OCI-LY7 (cell line): ENCODE measurements at regions of chr7 and their contacts with region 1.

Region 1: DNA sequence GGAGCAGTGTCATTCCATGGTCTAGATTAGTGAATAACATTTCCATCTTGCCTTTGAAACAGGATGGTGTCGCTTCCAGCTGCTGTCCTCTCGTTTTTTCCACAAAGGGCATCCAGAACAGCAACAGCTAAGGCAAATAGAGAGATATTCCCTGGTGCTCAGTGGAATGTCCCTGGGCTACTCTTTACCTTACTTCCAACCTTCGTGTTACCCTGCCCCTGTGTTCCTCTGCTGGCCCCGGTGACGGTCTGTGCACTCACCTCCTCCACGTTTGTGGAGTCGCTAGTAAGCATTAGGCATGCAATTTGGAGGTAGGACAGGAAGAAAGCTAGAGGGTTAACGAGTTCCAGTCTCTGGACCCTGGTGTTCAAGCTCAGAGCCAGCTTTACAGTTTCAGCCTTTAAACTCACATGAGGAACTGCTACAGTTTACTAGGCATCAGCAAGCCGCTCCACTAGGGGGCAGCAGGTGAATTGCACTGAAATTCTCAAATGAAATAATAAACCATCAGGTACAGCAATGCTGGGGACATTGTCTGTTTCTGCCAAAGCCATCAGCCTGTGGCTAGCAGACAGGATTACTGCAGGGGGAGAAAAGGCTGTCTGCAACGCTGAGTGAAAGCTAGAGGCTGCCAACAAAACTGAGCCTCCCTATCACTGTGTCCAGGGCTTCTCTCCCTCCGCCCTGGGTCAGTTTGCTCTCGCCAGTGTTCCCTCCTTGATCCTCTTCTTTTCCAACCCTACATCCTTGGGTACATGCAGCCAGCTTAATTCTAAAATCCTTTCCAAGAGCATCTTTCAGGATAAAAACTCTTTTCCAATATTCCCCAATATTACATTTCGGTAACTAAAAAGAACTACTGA is 9.0 kb downstream of the MRPL32 start:
- DNase-seq: peak; percentile 87
- H3K4me3 ChIP-seq: no peak overlapping the region
- H3K27ac ChIP-seq: no peak overlapping the region
- H3K4me1 ChIP-seq: peaks cover 29% of the 10 kb centered on the region
- CTCF ChIP-seq: peak; percentile 99

Region 2: DNA sequence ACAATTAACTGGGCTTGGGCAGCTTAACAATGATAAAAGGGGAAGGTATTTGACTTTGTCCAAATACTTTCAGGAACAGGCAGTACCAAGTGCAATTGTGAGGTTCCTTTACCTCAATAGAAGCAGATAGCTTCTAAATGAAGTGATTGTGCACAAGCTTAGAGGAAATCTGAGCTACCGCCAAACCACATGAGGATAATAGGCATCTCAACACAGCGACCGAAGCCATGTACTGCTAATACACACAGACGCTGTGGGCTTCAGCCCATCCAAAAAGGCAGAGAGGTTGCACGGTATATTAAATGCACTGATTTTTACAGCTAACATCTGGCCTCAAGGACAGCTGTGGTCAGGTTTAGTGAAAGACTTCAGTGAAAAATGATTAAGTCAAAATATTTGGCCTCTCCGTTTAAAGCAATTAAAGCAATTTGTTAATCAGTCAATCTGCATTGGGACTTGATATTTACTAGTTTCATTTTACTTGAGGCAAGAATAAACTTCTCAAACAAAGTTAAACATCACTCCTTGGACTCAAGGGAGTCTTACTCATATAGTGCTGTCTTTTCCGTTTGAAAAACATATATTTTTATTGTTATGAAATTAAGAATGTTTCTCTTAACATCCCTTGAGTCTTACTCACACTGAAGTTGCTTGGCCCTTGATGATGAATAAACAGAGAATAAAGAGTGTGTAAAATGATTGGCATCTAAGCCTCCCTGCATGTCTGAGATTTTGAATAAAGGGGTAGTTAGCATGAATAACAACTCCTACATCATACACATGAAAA is 335.6 kb before region 1 on chr7:
- CTCF ChIA-PET with region 1: no interaction called
- POLR2A ChIA-PET with region 1: no interaction called
- intact Hi-C with region 1: no loop called
- DNase-seq: no peak
- H3K4me3 ChIP-seq: no peak overlapping the region
- H3K27ac ChIP-seq: no peak overlapping the region
- H3K4me1 ChIP-seq: no peaks in the 10 kb centered on the region
- CTCF ChIP-seq: no peak

Region 3: GRCh38 chr7:43058271-43059066 is 117.3 kb after region 1 on chr7:
- CTCF ChIA-PET with region 1: no interaction called
- POLR2A ChIA-PET with region 1: interaction called, 3 read pairs
- intact Hi-C with region 1: loop called (anchors 2 kb)
- DNase-seq: peak; percentile 82
- H3K4me3 ChIP-seq: peak overlapping the region; percentile 36
- H3K27ac ChIP-seq: peak overlapping the region; percentile 97
- H3K4me1 ChIP-seq: peaks cover 52% of the 10 kb centered on the region
- CTCF ChIP-seq: no peak

Region 4: DNA sequence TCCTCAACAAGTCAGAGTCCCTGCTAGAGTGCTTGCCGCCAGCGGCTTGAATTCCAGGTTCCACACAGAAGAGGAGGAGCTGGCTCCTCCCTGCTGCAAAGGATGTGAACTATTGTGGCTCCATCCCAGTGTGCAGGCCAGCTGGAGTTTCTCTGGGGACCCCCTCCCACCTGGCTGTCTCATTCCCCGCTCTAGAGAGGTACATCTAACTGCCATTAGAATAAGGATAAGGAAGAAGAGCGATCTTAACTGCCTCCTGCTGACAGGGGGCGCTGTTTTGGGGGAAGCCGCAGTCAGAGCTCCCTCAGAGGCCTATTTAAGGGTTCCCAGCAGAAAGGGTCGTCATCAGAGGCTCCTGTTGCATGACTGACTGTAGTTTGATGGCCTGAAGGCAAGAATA is 130.4 kb after region 1 on chr7:
- CTCF ChIA-PET with region 1: interaction called, 3 read pairs
- POLR2A ChIA-PET with region 1: interaction called, 9 read pairs
- intact Hi-C with region 1: loop called (anchors 1 kb)
- DNase-seq: peak; percentile 73
- H3K4me3 ChIP-seq: peak overlapping the region; percentile 44
- H3K27ac ChIP-seq: peak overlapping the region; percentile 98
- H3K4me1 ChIP-seq: peaks cover 79% of the 10 kb centered on the region
- CTCF ChIP-seq: peak; percentile 85

Region 5: GRCh38 chr7:43108255-43109011 is 167.2 kb after region 1 on chr7:
- CTCF ChIA-PET with region 1: no interaction called
- POLR2A ChIA-PET with region 1: no interaction called
- intact Hi-C with region 1: loop called (anchors 1 kb)
- DNase-seq: peak; percentile 75
- H3K4me3 ChIP-seq: no peak overlapping the region
- H3K27ac ChIP-seq: no peak overlapping the region
- H3K4me1 ChIP-seq: peaks cover 45% of the 10 kb centered on the region
- CTCF ChIP-seq: peak; percentile 94

Region 6: DNA sequence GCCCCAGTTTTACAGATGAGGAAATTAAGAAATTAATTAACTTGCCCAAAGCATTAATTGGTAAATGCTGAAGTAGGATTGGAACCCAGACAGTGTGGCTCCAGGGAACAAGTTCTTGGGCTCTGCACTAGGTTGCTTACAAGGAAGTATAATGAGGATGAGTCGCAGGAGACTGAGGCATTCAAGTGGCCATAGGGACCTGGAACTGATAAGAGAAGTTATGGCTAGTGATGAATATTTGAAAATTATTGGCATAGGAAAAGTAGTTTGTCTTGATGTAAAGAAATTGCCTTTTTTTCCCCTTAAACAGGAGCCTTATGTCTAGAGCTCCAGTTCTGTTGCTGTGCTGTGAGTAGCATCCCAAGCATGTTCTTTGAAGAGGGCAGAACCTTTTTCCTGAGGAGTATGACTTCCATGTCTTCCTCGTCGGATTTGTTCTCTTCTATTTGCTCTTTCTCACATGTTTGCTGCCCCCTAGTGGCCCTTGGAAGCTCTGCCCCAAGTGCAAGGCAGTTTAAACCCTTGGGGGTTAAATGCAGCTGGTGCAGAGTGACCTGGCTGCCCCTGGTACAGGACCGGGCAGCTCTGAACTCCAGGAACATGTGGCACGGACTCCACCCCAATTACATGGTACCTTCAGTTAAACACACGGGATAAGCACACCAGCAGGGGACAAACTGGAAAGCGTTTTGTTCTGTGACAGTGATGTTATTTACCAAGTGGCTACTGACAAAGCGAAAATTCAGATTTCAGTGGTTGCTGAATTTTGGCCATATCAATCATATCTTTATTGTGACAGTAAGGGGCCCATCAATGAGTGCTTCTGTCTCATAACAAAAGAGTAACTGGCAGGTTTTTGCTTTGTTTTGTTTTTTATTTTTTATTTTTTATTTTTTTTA is 320.0 kb after region 1 on chr7:
- CTCF ChIA-PET with region 1: interaction called, 3 read pairs
- POLR2A ChIA-PET with region 1: interaction called, 4 read pairs
- intact Hi-C with region 1: loop called (anchors 1 kb)
- DNase-seq: peak; percentile 86
- H3K4me3 ChIP-seq: no peak overlapping the region
- H3K27ac ChIP-seq: no peak overlapping the region
- H3K4me1 ChIP-seq: peaks cover 3% of the 10 kb centered on the region
- CTCF ChIP-seq: peak; percentile 98

Region 7: DNA sequence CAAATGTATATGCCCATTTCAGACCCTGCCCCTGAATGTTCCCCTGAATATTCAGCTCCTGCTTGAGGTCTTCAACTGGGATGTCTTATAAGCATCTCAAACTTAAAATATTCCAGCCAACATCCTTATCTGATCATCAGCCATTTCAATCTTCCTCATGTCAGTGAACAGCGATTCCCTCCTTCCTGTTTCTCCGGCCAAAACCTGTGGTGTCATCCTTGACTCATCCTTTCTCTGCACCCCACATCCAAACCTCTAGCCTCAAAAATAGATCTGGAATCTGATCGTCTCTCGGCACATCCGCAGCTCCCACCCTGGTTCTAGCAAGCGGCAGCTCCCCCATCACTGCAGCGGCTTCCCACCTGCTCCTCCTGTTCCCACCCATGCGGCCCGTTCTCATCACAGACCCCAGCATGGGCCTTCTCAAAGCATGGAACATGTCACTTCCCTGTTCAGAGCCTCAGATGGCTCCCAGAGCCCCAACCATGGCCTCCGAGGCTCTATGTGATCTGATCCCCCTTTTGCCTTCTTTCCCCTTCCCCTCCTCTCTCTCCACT is 336.9 kb after region 1 on chr7:
- CTCF ChIA-PET with region 1: no interaction called
- POLR2A ChIA-PET with region 1: no interaction called
- intact Hi-C with region 1: no loop called
- DNase-seq: no peak
- H3K4me3 ChIP-seq: no peak overlapping the region
- H3K27ac ChIP-seq: no peak overlapping the region
- H3K4me1 ChIP-seq: no peaks in the 10 kb centered on the region
- CTCF ChIP-seq: no peak

Region 8: DNA sequence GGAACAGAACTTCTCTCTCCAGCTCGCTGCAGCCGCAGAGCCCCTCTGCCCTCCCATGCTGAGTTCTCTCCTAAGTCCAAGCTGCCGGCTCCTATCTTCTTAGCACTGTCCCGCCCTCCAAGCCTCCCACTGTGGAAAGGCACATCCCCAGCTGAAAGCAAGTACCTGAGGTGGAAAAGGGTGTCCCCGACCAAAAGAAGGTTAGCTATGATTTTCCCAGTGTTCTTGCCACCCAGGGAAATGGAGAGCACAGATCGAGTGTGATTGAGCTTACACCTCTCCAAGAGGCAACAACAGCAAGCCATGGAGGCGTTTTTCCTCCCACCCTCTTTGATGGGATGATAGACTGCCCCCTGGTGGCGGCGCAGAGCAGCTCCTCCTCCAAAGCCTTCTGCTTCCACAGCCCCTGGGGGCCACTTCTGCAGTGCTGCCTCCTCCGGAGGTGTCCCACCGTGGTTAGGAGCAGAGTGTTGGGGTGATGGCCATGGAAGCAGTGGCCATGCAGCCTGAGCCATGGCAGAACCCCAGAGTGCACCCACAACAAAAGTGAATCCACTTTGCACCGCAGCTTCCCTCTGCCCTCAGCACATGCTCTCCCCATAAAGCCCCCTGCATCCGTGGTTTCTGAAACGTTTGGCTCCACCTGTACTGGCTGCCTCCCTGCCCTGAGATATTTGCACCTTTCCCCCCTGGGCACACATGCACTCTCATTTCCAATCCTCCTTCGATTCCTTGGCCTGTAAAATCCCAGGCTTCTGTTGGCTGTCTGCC is 498.6 kb after region 1 on chr7:
- CTCF ChIA-PET with region 1: interaction called, 5 read pairs
- POLR2A ChIA-PET with region 1: no interaction called
- intact Hi-C with region 1: loop called (anchors 2 kb)
- DNase-seq: peak; percentile 71
- H3K4me3 ChIP-seq: no peak overlapping the region
- H3K27ac ChIP-seq: no peak overlapping the region
- H3K4me1 ChIP-seq: no peaks in the 10 kb centered on the region
- CTCF ChIP-seq: peak; percentile 92